K562 (cell line): ENCODE measurements at regions of chr10 and their contacts with region 1.

Region 1: DNA sequence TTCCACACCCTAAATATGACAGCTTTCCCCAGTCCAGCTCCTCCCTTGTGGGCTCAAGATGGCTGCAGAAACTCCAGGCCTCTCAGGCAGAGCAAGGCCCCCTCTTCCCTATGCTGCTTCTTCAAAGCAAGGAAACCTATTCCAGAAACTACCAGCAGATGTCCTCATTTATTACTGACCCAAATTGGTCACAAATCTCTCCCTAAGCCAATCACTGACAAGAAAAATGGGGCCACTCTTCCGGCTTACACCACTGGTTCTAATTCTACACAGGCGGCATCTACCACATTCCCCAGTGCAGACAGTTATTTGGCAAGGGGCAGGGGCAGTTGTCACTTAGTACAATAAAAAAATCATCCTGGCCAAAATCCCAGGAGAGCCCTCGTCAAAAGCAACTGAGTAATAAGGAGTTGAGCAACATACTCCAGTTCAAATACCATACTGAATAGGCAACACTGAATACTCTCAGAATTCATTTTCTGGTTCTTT is 150.4 kb downstream of the SFMBT2 start:
- DNase-seq: peak; percentile 65 to 75 (median 70)
- ATAC-seq: peak; percentile 92
- H3K4me3 ChIP-seq: no peak overlapping the region
- H3K27ac ChIP-seq: no peak overlapping the region
- H3K4me1 ChIP-seq: peaks cover 0 to 6% of the 10 kb centered on the region in 2 experiments; a peak in 3 of 5 replicates
- H3K27me3 ChIP-seq: no peaks in the 10 kb centered on the region
- CTCF ChIP-seq: peak; percentile 37 to 72 (median 70); a peak in 5 of 6 replicates
- EP300 ChIP-seq: no peak
- POLR2A ChIP-seq: no peak
- RAD21 ChIP-seq: peak; percentile 53 to 71

Region 2: DNA sequence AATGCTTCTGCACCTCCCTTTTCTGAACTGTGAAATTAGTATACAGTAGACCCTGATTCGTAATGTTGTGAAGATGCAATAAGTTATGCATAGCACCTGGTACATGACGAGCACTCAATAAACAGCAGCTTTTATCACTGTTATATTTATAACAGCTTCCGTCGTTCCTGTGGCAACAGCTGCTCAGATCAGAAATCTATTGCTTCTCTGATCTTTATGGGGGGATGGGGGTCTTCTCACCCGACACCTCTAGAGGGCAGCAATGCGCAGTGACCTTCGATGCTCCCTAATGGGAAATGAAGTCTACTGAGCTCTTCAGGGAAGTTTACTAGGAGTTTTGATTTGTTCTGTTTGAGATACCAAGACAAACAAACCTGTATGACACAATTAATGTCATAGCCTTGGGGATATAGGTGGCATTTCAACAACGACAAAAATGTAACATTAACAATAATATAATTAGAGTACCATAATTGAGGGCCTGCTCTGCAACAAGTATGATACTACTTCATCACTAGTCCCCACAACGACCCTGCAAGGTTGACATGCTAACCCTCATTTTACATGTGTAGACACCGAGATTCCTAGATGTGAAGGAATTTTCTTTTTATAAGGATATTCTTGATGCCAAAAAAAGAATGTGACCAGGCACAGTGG is 139.2 kb before region 1 on chr10:
- CTCF ChIA-PET with region 1: no interaction called
- POLR2A ChIA-PET with region 1: no interaction called
- in situ Hi-C with region 1: no loop called
- intact Hi-C with region 1: loop called (anchors 10 kb)
- DNase-seq: peak; percentile 75 to 79 (median 76)
- ATAC-seq: peak; percentile 88
- H3K4me3 ChIP-seq: no peak overlapping the region
- H3K27ac ChIP-seq: no peak overlapping the region
- H3K4me1 ChIP-seq: peaks cover 0 to 13% of the 10 kb centered on the region in 2 experiments; a peak in 2 of 5 replicates
- H3K27me3 ChIP-seq: no peaks in the 10 kb centered on the region
- CTCF ChIP-seq: peak; percentile 70 to 76 (median 74)
- EP300 ChIP-seq: no peak
- POLR2A ChIP-seq: no peak
- RAD21 ChIP-seq: peak; percentile 37 to 68

Region 3: GRCh38 chr10:7230651-7231350 is 29.7 kb before region 1 on chr10:
- CTCF ChIA-PET with region 1: no interaction called
- POLR2A ChIA-PET with region 1: no interaction called
- in situ Hi-C with region 1: no loop called
- intact Hi-C with region 1: no loop called
- DNase-seq: peak in 1 of 4 experiments; percentile 23
- ATAC-seq: no peak
- H3K4me3 ChIP-seq: no peak overlapping the region
- H3K27ac ChIP-seq: peak overlapping the region; percentile 72
- H3K4me1 ChIP-seq: peaks cover 10 to 43% of the 10 kb centered on the region in 2 experiments
- H3K27me3 ChIP-seq: no peaks in the 10 kb centered on the region
- CTCF ChIP-seq: no peak
- EP300 ChIP-seq: no peak
- POLR2A ChIP-seq: no peak
- RAD21 ChIP-seq: no peak

Region 4: DNA sequence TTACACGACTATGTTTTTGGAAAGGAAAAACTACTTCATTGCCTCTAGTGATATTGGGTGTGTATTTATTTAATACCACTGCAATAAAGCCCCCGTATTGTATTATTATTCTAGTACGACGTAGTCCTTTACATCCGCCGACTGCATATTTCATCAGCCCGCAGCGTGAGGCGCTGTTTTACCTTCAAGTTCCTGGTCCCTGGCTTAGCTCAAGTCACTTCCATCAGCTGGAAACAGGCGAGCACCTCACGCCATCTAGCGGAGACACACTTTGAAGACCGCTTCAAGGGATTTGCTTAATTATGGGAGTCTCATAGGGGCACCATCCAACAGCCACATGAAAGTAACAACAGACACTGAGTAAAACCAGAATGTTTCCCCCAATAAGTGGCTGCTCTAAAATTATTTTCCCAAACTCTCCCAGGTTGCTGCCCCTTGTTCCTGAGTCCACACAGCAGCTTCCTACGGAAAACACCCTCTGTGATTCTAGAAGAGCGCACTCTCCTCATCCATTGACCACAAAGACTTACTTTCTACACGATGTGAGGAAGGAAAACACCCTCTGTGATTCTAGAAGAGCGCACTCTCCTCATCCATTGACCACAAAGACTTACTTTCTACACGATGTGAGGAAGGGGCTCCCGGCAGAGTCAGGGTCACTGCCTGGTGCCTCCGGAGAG is 426.9 kb after region 1 on chr10:
- CTCF ChIA-PET with region 1: no interaction called
- POLR2A ChIA-PET with region 1: no interaction called
- in situ Hi-C with region 1: no loop called
- intact Hi-C with region 1: loop called (anchors 5 kb)
- DNase-seq: peak; percentile 67 to 89 (median 72)
- ATAC-seq: peak; percentile 100
- H3K4me3 ChIP-seq: no peak overlapping the region
- H3K27ac ChIP-seq: no peak overlapping the region
- H3K4me1 ChIP-seq: no peaks in the 10 kb centered on the region
- H3K27me3 ChIP-seq: no peaks in the 10 kb centered on the region
- CTCF ChIP-seq: peak; percentile 96 to 99 (median 99)
- EP300 ChIP-seq: peak; percentile 7; the same call in 1 of the 2 replicates
- POLR2A ChIP-seq: no peak
- RAD21 ChIP-seq: peak; percentile 88 to 92